ENCODE measurements at regions of chr2 and their contacts with region 1.

Region 1: DNA sequence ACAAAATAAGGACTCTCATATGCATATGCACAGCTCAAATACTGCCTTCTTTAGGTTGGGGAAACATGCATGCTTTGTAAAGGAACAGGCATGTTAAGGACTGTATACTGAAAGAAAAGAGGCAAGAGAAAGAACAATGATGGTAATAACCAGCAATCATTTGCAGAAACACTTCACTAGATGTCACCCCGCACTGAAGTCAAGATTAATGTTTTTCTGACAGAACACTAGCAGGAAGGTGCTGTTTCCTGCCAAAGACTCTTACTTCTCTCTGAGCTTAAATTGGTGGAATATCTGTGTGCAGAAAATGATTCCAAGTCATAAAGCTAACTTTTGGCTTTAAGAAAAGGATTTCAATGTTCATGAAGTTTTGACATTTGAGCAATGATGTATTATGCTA is 19.3 kb upstream of the CSRNP3 start:
- DNase-seq: peak; percentile 80
- H3K4me3 ChIP-seq: no peak overlapping the region
- H3K27ac ChIP-seq: peak overlapping the region; percentile 87
- H3K4me1 ChIP-seq: peaks cover 47% of the 10 kb centered on the region
- H3K27me3 ChIP-seq: no peaks in the 10 kb centered on the region
- CTCF ChIP-seq: peak; percentile 40; the same call in 1 of the 2 replicates

Region 2: DNA sequence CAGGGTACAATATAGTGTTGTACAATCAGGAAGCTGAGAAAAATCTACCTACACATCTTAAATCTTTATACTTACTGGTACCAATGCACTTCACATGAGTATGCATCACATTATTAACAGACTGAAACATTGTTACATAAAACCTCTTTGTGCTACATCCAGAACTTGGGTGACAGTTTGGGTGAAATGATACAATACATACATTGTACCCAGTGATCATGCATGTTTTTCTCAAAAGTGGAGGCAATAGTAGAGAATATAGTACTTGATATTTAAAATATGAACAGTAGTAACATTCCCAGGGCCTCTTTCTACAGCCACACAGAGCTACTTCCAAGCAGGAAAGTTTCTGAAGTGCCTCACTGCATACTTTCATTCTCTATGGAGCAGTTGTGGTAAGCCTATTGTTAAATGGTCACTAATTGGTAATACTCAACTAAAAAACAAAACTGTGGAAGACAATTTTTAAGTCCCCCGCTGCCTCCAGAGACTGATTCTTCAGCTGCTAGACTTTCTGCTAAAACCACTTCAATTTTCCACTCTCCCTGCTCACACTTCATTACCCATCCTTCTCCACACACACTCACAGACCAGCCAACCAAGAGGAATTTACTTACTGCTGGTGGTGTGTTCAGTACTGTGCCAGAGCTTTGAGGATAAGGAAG is 806.0 kb before region 1 on chr2:
- CTCF ChIA-PET with region 1: no interaction called
- POLR2A ChIA-PET with region 1: no interaction called
- intact Hi-C with region 1: no loop called
- DNase-seq: no peak
- H3K4me3 ChIP-seq: no peak overlapping the region
- H3K27ac ChIP-seq: no peak overlapping the region
- H3K4me1 ChIP-seq: no peaks in the 10 kb centered on the region
- H3K27me3 ChIP-seq: no peaks in the 10 kb centered on the region
- CTCF ChIP-seq: no peak

Region 3: GRCh38 chr2:165417009-165417408 is 33.1 kb before region 1 on chr2:
- CTCF ChIA-PET with region 1: no interaction called
- POLR2A ChIA-PET with region 1: no interaction called
- intact Hi-C with region 1: no loop called
- DNase-seq: no peak
- H3K4me3 ChIP-seq: no peak overlapping the region
- H3K27ac ChIP-seq: no peak overlapping the region
- H3K4me1 ChIP-seq: peaks cover 4% of the 10 kb centered on the region
- H3K27me3 ChIP-seq: no peaks in the 10 kb centered on the region
- CTCF ChIP-seq: no peak

Region 4: DNA sequence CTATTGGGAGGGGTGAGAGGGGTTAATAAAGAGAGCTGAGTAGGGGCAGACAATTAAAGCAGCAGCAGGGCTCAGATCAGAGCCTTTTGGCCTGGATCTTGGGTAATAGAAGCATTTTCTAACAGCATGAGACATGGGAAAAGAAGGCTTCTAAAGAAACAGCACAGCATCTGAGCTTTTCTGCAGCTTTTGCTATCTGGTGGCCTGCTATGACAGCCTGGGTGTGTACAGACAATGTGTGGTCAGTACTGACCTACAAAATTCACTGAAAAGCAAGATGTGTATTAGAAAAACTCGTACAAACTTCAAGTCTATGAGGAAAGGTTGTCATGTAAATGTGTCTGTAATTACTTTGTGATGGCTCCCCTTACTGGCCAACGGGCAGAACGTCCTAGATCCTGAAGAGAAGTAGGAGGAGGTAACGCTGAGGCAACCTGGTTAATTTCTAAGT is 248.3 kb after region 1 on chr2:
- CTCF ChIA-PET with region 1: no interaction called
- POLR2A ChIA-PET with region 1: no interaction called
- intact Hi-C with region 1: loop called (anchors 5 kb)
- DNase-seq: peak; percentile 85
- H3K4me3 ChIP-seq: no peak overlapping the region
- H3K27ac ChIP-seq: peak overlapping the region; percentile 6
- H3K4me1 ChIP-seq: peaks cover 23% of the 10 kb centered on the region
- H3K27me3 ChIP-seq: no peaks in the 10 kb centered on the region
- CTCF ChIP-seq: peak; percentile 71

Region 5: DNA sequence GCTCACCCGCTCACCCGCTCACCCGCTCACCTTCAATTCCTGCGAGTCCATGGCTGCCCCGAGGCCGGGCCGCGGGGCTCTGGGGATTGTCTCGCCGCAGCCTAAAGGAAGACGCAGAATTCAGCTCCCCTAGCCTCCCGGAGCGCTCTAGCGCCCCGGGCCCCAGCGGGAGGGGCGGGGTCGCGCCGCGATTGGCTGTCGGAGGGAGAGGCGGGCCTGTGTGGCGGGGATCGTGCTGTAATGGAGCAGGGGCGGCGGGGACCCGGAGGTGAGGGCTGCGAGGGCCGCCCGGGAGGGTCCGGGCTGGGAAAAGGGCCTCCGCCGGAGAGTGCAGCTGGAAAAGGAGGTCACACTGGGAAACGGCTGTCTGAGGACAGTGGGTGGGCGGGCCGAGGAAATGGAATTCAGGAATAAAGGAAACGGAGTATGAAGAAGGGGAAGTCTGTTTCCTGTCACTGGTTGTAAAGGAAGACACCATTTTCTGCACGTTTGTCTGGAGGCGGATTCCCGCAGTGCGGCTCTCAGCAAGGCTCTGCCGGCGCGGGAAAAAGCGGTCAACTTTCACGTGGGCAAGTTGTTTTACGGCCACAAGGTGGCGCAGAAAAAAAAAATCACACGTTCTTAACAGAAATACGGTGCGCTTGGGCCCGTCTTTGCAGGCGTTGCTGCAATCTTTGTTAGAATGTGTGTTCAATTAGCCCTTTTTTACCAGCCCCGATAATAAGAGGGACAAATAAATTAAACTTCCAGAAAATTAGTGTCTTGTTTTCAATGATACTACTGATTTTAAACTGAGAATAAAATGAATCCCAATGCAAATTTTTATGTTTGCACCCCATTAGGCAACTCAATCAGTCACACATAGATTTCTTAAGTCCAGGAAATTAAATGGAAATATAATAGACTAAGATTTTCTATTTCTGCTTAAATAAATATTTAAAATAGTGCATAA is 503.8 kb after region 1 on chr2 and contains the start of gene TTC21B:
- CTCF ChIA-PET with region 1: no interaction called
- POLR2A ChIA-PET with region 1: no interaction called
- intact Hi-C with region 1: loop called (anchors 10 kb)
- DNase-seq: peak; percentile 99
- H3K4me3 ChIP-seq: peak within 1 kb of the TSS; percentile 68
- H3K27ac ChIP-seq: peak within 1 kb of the TSS; percentile 86
- H3K4me1 ChIP-seq: peaks cover 31% of the 10 kb centered on the region
- H3K27me3 ChIP-seq: no peaks in the 10 kb centered on the region
- CTCF ChIP-seq: peak; percentile 90
- total RNA-seq, gene TTC21B: 83.0 TPM in 2 replicates

Region 6: GRCh38 chr2:166180951-166181812 is 731.0 kb after region 1 on chr2:
- CTCF ChIA-PET with region 1: no interaction called
- POLR2A ChIA-PET with region 1: no interaction called
- intact Hi-C with region 1: no loop called
- DNase-seq: peak; percentile 73
- H3K4me3 ChIP-seq: no peak overlapping the region
- H3K27ac ChIP-seq: no peak overlapping the region
- H3K4me1 ChIP-seq: no peaks in the 10 kb centered on the region
- H3K27me3 ChIP-seq: no peaks in the 10 kb centered on the region
- CTCF ChIP-seq: peak; percentile 75

Measured in A673 (cell line).